HEK293 (cell line): ENCODE measurements at regions of chr6 and their contacts with region 1.

Region 1: GRCh38 chr6:8983188-8983688 is 547.9 kb upstream of the SLC35B3 start:
- H3K4me3 ChIP-seq: no peak overlapping the region
- H3K27ac ChIP-seq: no peak overlapping the region
- H3K4me1 ChIP-seq: peaks cover 3% of the 10 kb centered on the region
- CTCF ChIP-seq: peak; percentile 84

Region 2: DNA sequence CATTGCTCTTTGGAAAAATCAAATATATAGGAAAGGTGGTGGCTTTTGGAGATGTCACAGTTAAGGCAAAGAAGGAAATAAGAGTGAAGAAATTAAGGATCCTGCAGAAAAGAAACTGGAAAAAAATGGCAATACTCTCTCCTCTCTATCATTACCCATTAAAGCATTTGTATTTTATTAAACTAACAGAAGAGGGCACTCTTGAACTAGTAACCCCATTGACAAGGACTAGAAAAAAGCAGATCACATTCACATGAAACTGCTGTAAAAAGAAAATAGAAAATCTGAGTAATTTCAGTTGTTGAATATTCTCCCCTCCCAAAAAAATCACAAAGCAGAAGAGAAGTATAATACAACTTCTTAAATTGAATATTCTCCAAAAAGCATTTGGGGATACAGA is 443.8 kb before region 1 on chr6:
- CTCF ChIA-PET with region 1: interaction called, 10 read pairs
- POLR2A ChIA-PET with region 1: no interaction called
- H3K4me3 ChIP-seq: no peak overlapping the region
- H3K27ac ChIP-seq: no peak overlapping the region
- H3K4me1 ChIP-seq: no peaks in the 10 kb centered on the region
- CTCF ChIP-seq: no peak

Region 3: DNA sequence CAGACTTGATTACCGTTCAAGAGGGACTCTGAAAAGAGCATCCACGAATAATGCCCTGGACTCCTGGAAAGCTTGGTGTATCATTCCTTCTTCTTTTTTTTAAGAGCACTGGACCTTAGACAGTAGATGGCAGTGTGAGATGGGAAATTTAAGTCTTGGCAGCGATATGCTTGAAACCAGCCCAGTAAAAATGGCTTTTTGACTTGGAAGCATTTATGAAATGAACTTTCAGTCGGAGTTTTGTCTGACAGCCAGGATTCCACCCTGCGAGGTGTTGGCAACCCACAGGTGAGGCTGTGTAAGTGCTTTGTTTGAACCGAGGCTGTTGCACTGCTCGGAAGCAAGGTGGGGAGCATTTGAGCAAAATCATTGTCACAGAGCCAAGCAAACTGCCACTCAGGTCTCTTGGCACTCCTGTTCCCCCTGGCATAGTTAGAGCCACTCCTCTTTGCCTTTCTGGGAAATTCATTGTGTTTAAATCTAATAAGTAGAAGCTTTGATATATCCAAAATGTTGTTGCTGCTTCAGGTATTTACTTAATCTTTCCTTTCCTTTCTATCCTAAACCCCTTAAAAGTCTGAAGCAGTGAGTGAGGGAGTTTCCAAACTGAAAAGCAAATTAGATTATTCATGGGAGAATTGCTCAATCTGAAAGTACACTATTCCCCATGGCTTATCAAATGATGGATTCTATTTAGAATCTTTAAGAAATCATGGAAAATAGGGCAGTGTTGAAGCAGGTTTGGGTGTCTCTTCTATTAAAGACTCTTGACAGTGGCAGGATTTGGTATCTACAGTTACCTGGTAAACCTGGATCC is 275.1 kb before region 1 on chr6:
- CTCF ChIA-PET with region 1: interaction called, 17 read pairs
- POLR2A ChIA-PET with region 1: no interaction called
- H3K4me3 ChIP-seq: peak overlapping the region; percentile 13; the same call in 1 of the 2 replicates
- H3K27ac ChIP-seq: no peak overlapping the region
- H3K4me1 ChIP-seq: peaks cover 6% of the 10 kb centered on the region; the same call in 1 of the 2 replicates
- CTCF ChIP-seq: peak; percentile 53; the same call in 1 of the 2 replicates

Region 4: DNA sequence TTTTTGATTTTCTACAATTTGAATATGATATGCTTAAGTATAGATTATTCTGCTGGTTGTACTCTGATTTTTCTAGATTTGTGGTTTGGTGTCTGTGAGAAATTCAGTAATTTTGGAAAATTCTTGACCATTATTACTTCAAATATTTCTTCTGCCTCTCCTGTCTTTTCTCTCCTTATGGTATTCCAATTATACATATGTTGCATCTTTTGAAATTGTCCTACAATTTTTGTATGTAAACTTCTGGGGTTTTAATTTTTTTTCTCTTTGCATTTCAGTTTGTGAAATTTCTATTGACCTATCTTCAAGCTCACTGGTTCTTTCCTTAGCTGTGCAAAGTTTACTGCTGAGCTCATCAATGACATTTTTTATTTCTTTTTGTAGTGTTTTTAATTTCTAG is 13.5 kb before region 1 on chr6:
- CTCF ChIA-PET with region 1: interaction called, 11 read pairs
- POLR2A ChIA-PET with region 1: no interaction called
- H3K4me3 ChIP-seq: no peak overlapping the region
- H3K27ac ChIP-seq: no peak overlapping the region
- H3K4me1 ChIP-seq: no peaks in the 10 kb centered on the region
- CTCF ChIP-seq: no peak

Region 5: GRCh38 chr6:9002833-9003232 is 19.6 kb after region 1 on chr6:
- CTCF ChIA-PET with region 1: interaction called, 12 read pairs
- POLR2A ChIA-PET with region 1: no interaction called
- H3K4me3 ChIP-seq: no peak overlapping the region
- H3K27ac ChIP-seq: no peak overlapping the region
- H3K4me1 ChIP-seq: no peaks in the 10 kb centered on the region
- CTCF ChIP-seq: no peak